H1 (cell line): ENCODE measurements at regions of chr6 and their contacts with region 1.

Region 1: DNA sequence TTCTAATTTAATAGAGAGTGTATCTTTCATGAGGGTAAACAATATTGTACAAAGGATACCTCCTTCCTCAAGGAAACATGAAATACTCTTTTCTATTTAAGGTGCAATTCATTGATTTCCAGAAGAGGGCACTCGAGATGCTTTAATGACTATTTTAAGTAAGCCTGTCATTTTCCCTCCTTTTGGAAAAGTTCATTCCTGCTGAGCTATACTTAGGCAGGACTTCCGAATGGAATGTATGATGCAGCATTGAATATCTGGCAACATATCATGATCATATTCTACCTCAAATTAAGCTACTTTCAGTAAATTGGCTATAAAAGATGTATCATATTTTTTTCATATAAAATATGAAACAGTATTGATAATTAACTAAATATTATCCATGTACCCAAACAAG is 5.0 kb downstream of the DST start:
- DNase-seq: no peak
- H3K4me3 ChIP-seq: no peak overlapping the region
- H3K27ac ChIP-seq: no peak overlapping the region
- H3K4me1 ChIP-seq: no peaks in the 10 kb centered on the region
- H3K27me3 ChIP-seq: no peaks in the 10 kb centered on the region
- CTCF ChIP-seq: peak in 2 of 3 experiments; percentile 49 to 56; a peak in 2 of 4 replicates
- EP300 ChIP-seq: no peak
- POLR2A ChIP-seq: no peak
- RAD21 ChIP-seq: peak; percentile 68 to 72

Region 2: DNA sequence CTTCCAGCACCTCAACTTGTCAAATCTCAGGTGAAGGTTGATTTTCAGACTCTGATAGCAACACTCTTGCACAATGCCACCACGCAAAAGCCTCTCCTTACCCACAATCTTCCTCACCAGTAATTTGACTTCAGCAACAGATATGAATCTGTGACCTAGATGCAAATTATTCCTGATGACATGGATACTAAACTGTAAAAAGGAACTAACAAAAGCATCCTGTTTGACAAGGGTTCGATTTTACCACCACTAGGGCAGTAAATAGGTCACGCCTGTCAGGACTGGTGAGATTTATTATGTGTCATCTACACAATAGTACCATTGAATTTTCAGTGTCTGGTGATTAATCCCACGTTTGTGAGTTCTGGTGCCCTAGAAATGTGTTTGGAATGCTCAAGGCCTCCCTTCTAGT is 255.8 kb before region 1 on chr6:
- CTCF ChIA-PET with region 1: no interaction called
- POLR2A ChIA-PET with region 1: no interaction called
- DNase-seq: no peak
- H3K4me3 ChIP-seq: no peak overlapping the region
- H3K27ac ChIP-seq: no peak overlapping the region
- H3K4me1 ChIP-seq: no peaks in the 10 kb centered on the region
- H3K27me3 ChIP-seq: no peaks in the 10 kb centered on the region
- CTCF ChIP-seq: no peak
- EP300 ChIP-seq: no peak
- POLR2A ChIP-seq: no peak
- RAD21 ChIP-seq: no peak

Region 3: GRCh38 chr6:56652994-56653393 is 15.4 kb after region 1 on chr6:
- CTCF ChIA-PET with region 1: interaction called, 13 read pairs
- POLR2A ChIA-PET with region 1: no interaction called
- DNase-seq: no peak
- H3K4me3 ChIP-seq: no peak overlapping the region
- H3K27ac ChIP-seq: no peak overlapping the region
- H3K4me1 ChIP-seq: peaks cover 0 to 3% (median under 1%) of the 10 kb centered on the region in 4 experiments; a peak in 1 of 7 replicates
- H3K27me3 ChIP-seq: no peaks in the 10 kb centered on the region
- CTCF ChIP-seq: no peak
- EP300 ChIP-seq: no peak
- POLR2A ChIP-seq: no peak
- RAD21 ChIP-seq: no peak

Region 4: DNA sequence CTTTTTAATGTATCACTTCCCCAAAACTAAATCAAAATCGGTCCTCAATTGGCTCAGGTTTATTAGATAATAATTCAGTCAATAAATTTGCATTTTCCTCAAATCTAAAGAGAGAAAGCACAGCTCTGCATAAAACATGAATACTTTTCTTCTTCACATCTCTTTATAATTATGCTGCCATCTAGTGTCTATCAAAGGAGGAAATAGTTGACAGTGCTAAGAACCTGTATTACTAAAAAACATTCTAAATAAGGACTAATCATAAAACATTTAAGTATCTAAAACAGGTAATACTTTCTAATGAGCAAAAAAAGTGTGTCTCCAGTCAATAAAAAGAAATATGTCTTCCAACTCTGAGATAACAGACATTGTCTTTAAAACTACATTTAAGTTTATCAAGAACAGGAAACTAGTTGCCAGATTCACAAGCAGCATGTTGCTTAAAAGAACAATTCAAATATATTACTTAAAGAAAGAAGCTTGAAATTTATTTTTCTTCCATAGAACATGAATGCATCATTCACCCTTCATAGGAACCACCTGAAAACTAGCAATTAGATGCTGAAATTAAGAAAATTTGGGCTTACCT is 61.5 kb after region 1 on chr6:
- CTCF ChIA-PET with region 1: interaction called, 22 read pairs
- POLR2A ChIA-PET with region 1: no interaction called
- DNase-seq: no peak
- H3K4me3 ChIP-seq: no peak overlapping the region
- H3K27ac ChIP-seq: no peak overlapping the region
- H3K4me1 ChIP-seq: no peaks in the 10 kb centered on the region
- H3K27me3 ChIP-seq: no peaks in the 10 kb centered on the region
- CTCF ChIP-seq: peak in 1 of 3 experiments; percentile 2; a peak in 1 of 4 replicates
- EP300 ChIP-seq: no peak
- POLR2A ChIP-seq: no peak
- RAD21 ChIP-seq: no peak

Region 5: GRCh38 chr6:56757588-56757984 is 119.9 kb after region 1 on chr6:
- CTCF ChIA-PET with region 1: interaction called, 35 read pairs
- POLR2A ChIA-PET with region 1: no interaction called
- DNase-seq: no peak
- H3K4me3 ChIP-seq: no peak overlapping the region
- H3K27ac ChIP-seq: no peak overlapping the region
- H3K4me1 ChIP-seq: peaks cover 0 to 18% (median 12%) of the 10 kb centered on the region in 4 experiments; a peak in 6 of 7 replicates
- H3K27me3 ChIP-seq: no peaks in the 10 kb centered on the region
- CTCF ChIP-seq: peak in 2 of 3 experiments; percentile 49 to 61; a peak in 3 of 4 replicates
- EP300 ChIP-seq: no peak
- POLR2A ChIP-seq: no peak
- RAD21 ChIP-seq: peak; percentile 73 to 79